ENCODE measurements at regions of chr10 and their contacts with region 1.

Region 1: DNA sequence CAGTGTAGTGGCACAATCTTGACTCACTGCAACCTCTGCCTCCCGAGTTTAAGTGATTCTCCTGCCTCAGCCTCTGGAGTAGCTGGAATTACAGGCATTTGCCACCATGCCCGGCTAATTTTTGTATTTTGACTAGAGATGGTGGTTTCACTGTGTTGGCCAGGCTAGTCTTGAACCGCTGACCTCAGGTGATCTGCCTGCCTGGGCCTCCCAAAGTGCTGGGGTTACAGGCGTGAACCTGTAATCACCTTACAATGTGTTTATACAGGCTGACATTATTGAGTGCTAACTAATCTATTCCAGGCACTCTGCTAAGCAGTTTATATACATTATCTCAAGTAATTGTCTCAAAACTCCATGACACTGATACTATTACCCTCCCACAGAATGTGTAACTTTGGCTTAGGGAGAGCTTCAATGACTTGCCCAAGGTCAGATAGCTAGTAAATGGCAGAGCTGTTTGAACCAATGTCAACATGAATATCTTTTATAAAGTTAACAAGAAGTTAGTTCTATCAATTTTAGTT is 36.8 kb downstream of the KIFBP start:
- DNase-seq: no peak
- H3K4me3 Mint-ChIP-seq: no peak overlapping the region
- H3K27ac Mint-ChIP-seq: no peak overlapping the region
- H3K4me1 Mint-ChIP-seq: peaks cover 17% of the 10 kb centered on the region
- H3K27me3 Mint-ChIP-seq: no peaks in the 10 kb centered on the region

Region 2: DNA sequence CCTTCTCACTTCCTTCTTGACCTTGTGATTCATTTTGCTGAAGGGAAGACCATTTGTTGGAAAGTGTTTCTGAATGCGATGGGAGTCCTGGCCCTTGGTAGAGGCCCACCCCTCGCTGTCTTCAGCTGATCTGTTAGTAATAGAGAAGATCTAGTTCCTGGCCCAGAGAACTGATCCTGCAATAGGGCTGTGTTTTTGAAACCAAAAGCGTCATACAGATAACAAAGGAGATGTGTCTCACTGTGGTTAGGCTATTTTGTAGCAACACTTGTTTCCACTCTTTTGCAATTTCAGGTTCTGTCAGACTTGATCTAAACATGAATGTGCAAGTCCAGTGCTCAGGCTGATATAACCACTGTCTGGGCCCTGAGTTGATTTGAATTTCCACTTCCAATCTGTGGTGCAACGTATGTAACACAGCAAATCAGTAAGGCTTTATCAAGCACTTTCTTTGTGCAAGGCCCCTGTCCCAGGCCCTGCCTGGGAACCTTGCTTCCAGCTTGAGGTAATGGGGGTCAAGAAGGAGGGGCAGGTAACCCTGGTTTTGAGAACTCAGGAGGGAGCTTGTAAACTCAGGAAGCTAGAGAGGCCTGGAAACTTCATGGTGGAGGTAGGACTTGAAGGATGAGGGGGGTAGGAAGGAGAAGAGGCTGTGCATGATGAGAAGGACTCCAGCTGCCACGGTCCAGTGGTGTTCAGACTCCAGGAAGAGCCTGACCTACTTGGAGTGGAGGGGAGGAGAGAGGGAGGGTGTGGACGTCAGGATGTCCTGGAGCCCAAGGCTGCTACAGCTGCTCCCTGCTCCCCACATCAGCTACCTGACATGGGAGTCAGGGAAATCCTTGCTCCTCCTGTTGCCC is 20.2 kb after region 1 on chr10:
- intact Hi-C with region 1: loop called (anchors 1 kb)
- DNase-seq: peak; percentile 49
- H3K4me3 Mint-ChIP-seq: peak overlapping the region; percentile 70
- H3K27ac Mint-ChIP-seq: peak overlapping the region; percentile 100
- H3K4me1 Mint-ChIP-seq: peaks cover 49% of the 10 kb centered on the region
- H3K27me3 Mint-ChIP-seq: no peaks in the 10 kb centered on the region

Region 3: DNA sequence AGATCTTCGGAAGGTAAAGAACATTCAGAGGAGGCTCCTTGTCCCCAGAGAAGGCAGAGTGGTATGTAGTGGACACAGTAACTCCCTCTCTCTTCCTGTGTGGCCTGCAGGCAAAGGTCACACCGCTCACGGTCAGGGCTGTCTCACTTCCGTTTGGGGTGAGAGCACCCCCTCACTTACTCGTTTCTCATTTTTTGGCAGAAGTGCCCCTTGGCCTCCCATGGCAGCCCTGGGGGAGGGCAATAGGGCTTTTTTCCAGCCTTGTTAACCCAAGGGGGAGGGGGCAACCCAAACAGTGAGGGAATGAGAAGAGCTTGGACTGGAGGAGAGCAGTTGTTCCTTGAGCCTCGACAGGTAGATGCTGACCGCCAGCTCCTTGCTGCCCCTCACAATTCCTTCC is 30.7 kb after region 1 on chr10:
- intact Hi-C with region 1: no loop called
- DNase-seq: no peak
- H3K4me3 Mint-ChIP-seq: peak overlapping the region; percentile 30
- H3K27ac Mint-ChIP-seq: peak overlapping the region; percentile 82
- H3K4me1 Mint-ChIP-seq: peaks cover 59% of the 10 kb centered on the region
- H3K27me3 Mint-ChIP-seq: no peaks in the 10 kb centered on the region